Dorsolateral prefrontal cortex (tissue), 120 donors: ENCODE measurements at regions of chr17 and their contacts with region 1.

Region 1: GRCh38 chr17:3474212-3474611 is 1.6 kb upstream of the ASPA start:
- DNase-seq: no peak
- H3K4me3 ChIP-seq: peak overlapping the region in 13 of 59 donors; percentile 1 to 36 (median 17)
- H3K27ac ChIP-seq: peak overlapping the region in 58 of 59 donors; percentile 55 to 94 (median 82)
- H3K27me3 ChIP-seq: no peaks in the 10 kb centered on the region
- CTCF ChIP-seq: no peak

Region 2: GRCh38 chr17:3497101-3497500 is 22.9 kb after region 1 on chr17:
- intact Hi-C with region 1: no loop called
- DNase-seq: no peak
- H3K4me3 ChIP-seq: no peak overlapping the region
- H3K27ac ChIP-seq: peak overlapping the region in 4 of 59 donors; percentile 31 to 50 (median 36)
- H3K27me3 ChIP-seq: no peaks in the 10 kb centered on the region
- CTCF ChIP-seq: no peak

Region 3: DNA sequence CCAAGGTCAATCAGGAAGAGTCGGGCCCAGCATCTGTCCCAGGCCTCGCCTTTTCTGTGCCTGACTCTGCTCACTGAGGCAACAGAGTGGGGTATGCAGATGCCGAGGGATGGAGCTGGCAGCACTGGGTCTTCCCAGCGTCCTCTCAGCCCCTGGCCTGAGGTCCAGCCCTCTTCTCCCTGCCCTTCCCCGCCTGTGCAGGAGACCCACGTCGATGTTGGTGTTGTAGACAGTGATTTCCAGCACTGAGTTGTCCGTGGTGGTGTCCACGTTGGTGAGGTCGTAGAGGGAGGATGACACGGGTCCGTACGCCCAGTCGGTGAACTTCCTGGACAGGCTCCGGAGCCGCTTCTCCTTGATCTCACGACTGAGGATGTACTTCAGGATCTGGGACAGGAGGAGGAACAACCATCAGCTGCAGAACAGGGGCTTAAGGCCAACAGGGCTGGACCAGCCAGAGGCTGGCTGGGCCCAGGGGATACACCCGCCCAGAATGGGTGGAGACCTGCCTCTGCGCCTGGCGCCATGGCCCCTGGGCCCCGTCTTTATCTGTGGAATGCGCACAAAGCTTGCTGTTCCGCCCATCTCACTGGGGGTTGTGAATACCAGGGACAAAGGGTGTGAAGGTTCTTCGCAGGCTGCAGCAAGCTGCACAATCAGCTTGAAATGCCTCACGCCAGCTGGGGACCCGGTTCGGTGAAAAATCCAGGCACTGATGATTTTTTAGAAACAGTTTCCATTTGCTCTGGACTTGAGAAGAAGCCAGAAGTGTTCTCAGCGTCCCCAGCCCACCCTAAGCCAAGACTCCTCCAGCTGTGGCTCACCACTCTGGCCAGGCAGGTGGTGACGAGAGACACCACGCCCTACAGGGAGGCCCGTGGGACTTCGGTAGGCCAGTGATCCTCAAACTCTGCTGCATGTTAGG is 55.9 kb after region 1 on chr17:
- intact Hi-C with region 1: loop called (anchors 2 kb)
- DNase-seq: peak in 9 of 10 donors; percentile 33 to 77 (median 63)
- H3K4me3 ChIP-seq: peak overlapping the region in 37 of 59 donors; percentile 0 to 47 (median 30)
- H3K27ac ChIP-seq: peak overlapping the region; percentile 86 to 100 (median 98)
- H3K27me3 ChIP-seq: no peaks in the 10 kb centered on the region
- CTCF ChIP-seq: no peak

Region 4: GRCh38 chr17:3535253-3535995 is 61.2 kb after region 1 on chr17:
- intact Hi-C with region 1: loop called (anchors 2 kb)
- DNase-seq: peak in 9 of 10 donors; percentile 60 to 85 (median 78)
- H3K4me3 ChIP-seq: peak overlapping the region; percentile 24 to 76 (median 68)
- H3K27ac ChIP-seq: peak overlapping the region; percentile 32 to 100 (median 96)
- H3K27me3 ChIP-seq: no peaks in the 10 kb centered on the region
- CTCF ChIP-seq: peak; percentile 42 to 90 (median 78)

Region 5: DNA sequence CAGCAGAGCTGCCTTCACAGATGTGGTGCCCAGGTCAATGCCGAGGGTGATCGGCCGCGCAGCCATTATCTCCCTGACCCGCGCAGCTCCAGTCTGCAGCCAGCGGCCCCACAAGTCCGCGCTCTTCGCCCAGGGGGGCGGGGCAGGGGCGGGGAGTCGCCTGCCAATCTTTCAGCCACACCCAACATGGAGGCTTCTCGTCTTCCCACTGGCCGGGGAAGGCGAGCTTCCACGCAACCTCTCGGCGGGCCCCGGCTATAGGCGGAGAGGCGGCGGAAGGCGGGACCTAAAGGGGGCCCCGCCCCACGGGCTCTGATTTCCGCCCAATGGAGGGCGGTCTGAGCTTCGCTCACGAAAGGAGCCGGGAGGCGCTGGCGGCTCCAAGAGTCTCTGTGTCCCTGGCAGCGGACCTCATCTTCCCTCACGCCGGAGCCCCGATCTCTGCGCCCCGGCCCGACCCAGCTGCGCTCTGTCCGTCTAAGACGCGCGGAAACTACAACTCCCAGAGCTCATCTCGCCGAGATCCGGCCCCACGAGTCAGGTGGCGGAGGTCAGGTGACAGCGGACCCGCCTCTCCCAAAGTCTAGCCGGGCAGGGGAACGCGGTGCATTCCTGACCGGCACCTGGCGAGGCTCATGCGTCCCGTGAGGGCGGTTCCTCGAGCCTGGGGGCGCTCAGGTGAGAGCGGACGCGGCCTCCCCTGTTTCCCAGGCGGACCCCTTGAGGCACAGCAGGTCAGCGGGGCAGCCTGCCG is 162.1 kb after region 1 on chr17 and contains the starts of genes CTNS and SHPK:
- intact Hi-C with region 1: loop called (anchors 5 to 10 kb)
- DNase-seq: peak; percentile 95 to 99 (median 98)
- H3K4me3 ChIP-seq: peak within 1 kb of the TSS; percentile 66 to 100 (median 97)
- H3K27ac ChIP-seq: peak within 1 kb of the TSS; percentile 86 to 100 (median 98)
- H3K27me3 ChIP-seq: no peaks in the 10 kb centered on the region
- CTCF ChIP-seq: peak in 17 of 56 donors; percentile 3 to 45 (median 27)
- total RNA-seq, gene CTNS: 5.0 to 16.5 (median 9.6) TPM
- total RNA-seq, gene SHPK: 7.4 to 28.1 (median 15.1) TPM

Region 6: DNA sequence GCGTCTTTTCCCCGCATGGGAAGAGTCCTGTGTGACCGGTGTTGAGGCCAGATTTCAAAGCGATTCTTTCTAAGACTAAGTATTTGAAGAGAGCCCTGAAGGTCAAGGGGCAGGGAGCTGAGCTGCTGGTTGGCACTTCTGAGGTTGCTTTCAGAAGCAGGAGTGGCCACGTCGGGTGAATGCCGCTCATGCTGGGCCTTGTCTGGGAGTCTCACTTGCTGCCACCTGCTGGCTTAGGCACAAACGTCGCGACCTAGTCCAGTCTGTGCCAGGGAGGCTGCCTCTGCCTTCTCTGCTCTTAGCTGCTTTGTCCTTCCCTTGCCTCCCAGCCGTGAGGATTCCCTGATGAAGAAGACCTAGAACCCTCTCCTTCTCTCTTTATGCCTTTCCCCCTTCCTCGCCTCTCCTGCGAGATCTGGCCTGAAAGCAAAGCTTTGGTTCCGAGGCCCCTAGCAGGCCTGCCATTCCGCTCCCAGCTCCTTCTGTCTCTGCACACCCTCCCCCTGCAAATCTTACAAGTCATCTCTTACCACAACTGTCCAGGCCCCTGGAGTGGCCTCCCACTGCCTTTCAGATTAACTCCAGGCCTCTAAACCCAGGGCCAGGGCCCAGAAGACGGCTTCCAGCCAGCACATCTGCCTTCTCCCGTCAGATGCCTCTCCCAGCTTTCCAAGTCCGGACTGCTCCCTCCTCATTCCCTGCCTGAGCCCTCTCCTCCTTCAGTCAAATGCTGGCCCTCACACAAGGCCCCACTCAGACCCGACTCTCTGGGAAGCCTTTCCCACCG is 173.8 kb after region 1 on chr17:
- intact Hi-C with region 1: loop called in 1 of 2 experiments (anchors 5 kb)
- DNase-seq: peak; percentile 25 to 84 (median 80)
- H3K4me3 ChIP-seq: no peak overlapping the region
- H3K27ac ChIP-seq: peak overlapping the region in 22 of 59 donors; percentile 2 to 78 (median 37)
- H3K27me3 ChIP-seq: no peaks in the 10 kb centered on the region
- CTCF ChIP-seq: peak in 55 of 56 donors; percentile 11 to 78 (median 59)